ENCODE measurements at regions of chr1 and their contacts with region 1.

Region 1: DNA sequence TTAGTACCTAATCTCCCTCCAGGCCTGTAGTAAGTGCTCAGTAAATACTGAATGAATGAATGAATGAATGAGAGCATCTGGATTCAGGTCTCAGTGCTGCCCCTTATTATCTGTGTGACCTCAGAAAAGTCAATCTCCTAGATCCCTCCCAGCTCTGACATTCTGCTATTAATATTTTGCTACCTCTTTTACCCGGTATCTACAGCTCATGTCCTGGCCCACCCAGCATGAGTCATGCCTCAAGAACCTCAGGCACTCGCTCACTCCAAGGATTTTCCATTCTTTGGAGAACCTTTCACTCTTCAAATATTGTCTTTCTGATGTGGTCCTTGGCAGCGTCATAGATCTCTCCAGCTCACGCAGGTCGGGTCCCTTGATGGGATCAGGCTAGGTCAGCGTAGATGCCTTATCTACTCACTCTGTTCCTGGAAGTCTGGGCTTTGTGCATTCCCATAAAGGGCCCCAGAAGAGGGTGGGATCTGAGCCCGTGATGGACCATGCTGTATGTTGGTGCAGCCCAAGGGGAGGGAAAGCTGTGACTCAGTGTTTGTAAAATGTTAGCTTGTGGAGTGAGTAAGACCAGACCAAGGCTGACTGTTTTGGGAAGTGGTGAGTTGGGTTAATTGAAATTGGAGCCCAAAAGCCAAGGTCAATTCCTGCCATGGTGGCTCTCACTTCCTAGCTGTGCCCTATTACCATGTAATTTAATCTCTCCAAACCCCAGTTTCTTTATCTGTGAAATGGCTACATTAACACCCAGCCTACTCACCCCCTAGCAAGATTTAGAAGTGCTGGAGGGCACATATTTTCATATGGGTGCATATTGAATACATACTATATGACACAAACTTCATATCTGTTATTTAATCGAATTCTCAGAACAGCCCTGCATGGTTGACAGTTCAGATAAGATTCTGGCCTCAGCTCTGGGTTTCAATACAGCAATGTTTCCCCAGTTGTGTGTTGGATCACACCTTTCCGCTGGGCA is 214.1 kb upstream of the USP24 start:
- DNase-seq: peak; percentile 95 to 100
- H3K4me3 ChIP-seq: no peak overlapping the region
- H3K27ac ChIP-seq: peak overlapping the region; percentile 77
- H3K4me1 ChIP-seq: peaks cover 47% of the 10 kb centered on the region
- H3K27me3 ChIP-seq: no peaks in the 10 kb centered on the region
- CTCF ChIP-seq: no peak

Region 2: DNA sequence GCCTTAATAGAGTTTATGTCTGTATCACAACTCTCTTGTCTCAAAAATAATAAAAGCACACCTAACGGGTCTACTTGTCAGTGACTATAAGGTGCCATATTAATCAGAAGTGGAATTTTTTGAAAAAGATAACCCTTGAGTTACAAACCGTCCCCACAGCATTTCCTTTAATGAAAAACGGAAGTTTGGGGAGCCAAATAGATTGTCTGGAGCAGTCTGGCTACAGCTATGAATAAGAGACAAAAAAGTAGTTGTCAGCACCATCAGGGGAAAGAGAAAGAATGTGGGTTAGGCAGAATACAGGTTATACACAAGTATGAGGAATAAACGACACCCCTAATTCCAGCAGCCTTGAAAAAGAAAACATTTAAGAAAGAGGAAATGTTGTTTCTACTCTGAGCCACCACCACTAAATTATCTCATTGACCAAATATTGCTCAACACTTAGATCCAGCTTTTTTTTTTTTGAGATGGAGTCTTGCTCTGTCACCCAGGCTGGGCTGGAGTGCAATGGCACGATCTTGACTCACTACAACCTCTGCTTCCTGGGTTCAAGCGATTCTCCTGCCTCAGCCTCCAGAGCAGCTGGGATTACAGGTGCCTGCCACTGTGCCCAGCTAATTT is 184.7 kb before region 1 on chr1:
- CTCF ChIA-PET with region 1: no interaction called
- POLR2A ChIA-PET with region 1: interaction called, 13 read pairs
- intact Hi-C with region 1: no loop called
- DNase-seq: peak; percentile 39 to 86
- H3K4me3 ChIP-seq: peak overlapping the region; percentile 23; the same call in 1 of the 2 replicates
- H3K27ac ChIP-seq: peak overlapping the region; percentile 96
- H3K4me1 ChIP-seq: peaks cover 57% of the 10 kb centered on the region
- H3K27me3 ChIP-seq: no peaks in the 10 kb centered on the region
- CTCF ChIP-seq: no peak

Region 3: GRCh38 chr1:55375617-55376258 is 53.5 kb before region 1 on chr1:
- CTCF ChIA-PET with region 1: interaction called, 7 read pairs
- POLR2A ChIA-PET with region 1: no interaction called
- intact Hi-C with region 1: loop called (anchors 5 kb)
- DNase-seq: peak in 1 of 2 experiments; percentile 25
- H3K4me3 ChIP-seq: no peak overlapping the region
- H3K27ac ChIP-seq: no peak overlapping the region
- H3K4me1 ChIP-seq: no peaks in the 10 kb centered on the region; the same call in 1 of the 2 replicates
- H3K27me3 ChIP-seq: no peaks in the 10 kb centered on the region
- CTCF ChIP-seq: peak; percentile 88

Region 4: DNA sequence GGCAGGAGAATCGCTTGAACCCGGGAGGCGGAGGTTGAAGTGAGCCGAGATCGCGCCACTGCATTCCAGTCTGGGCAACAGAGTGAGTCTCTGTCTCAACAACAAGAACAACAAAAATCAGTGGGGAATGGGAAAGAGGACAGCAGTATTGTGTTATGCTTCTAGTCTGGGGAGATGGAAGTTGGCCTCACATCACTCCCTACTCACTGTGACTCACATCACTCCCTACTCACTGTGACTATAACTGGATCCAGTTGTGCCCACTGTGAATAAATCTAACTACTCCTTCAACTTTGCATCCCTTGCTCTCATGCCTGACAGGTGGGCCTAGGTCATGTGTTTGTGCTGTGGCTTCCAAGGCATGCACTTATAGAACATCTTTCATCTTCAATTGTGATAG is 71.4 kb after region 1 on chr1:
- CTCF ChIA-PET with region 1: no interaction called
- POLR2A ChIA-PET with region 1: no interaction called
- intact Hi-C with region 1: no loop called
- DNase-seq: no peak
- H3K4me3 ChIP-seq: no peak overlapping the region
- H3K27ac ChIP-seq: no peak overlapping the region
- H3K4me1 ChIP-seq: peaks cover 9% of the 10 kb centered on the region
- H3K27me3 ChIP-seq: no peaks in the 10 kb centered on the region
- CTCF ChIP-seq: no peak

Region 5: DNA sequence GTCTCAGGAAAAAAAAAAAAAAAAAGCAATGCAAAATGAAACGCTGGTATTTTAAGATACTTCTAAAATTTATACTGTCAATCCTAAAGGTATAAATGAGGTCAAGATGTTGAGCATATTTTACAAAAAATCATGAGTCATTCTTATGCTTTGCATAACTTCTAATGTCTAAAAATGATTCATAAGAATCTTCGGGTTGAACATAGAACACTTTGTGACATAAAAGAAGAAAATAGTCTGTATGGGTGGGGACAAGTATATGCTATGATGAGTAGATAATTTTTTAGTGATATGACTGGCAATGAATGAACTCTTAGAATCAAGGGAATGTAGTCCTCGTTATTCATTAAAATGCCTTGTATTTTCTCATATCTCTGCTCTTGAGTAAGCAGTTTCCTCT is 202.8 kb after region 1 on chr1:
- CTCF ChIA-PET with region 1: no interaction called
- POLR2A ChIA-PET with region 1: no interaction called
- intact Hi-C with region 1: loop called (anchors 2 kb)
- DNase-seq: peak in 1 of 2 experiments; percentile 79
- H3K4me3 ChIP-seq: no peak overlapping the region
- H3K27ac ChIP-seq: peak overlapping the region; percentile 45
- H3K4me1 ChIP-seq: peaks cover 27% of the 10 kb centered on the region
- H3K27me3 ChIP-seq: no peaks in the 10 kb centered on the region
- CTCF ChIP-seq: no peak

Region 6: DNA sequence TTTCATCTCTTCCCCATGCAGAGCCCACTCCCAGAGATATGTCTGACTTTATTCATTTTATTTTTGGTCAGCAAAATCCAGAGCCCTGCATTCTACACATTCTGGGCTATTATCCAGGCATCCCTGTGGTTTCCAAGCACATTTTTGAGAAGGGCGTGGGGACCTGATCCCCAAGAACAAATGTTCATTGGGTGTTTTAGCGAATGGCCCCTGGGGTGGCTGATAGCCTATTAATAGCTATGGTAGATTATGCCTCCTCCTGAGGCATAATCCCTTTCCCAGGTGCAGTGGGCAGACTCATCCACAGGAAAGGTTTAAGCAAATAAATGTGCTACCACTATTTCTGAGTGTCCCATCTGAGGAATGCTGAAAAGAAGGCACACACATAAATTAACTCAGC is 297.8 kb after region 1 on chr1:
- CTCF ChIA-PET with region 1: no interaction called
- POLR2A ChIA-PET with region 1: no interaction called
- intact Hi-C with region 1: loop called (anchors 1 kb)
- DNase-seq: peak; percentile 77 to 89
- H3K4me3 ChIP-seq: no peak overlapping the region
- H3K27ac ChIP-seq: peak overlapping the region; percentile 70
- H3K4me1 ChIP-seq: peaks cover 37% of the 10 kb centered on the region
- H3K27me3 ChIP-seq: no peaks in the 10 kb centered on the region
- CTCF ChIP-seq: no peak

Region 7: DNA sequence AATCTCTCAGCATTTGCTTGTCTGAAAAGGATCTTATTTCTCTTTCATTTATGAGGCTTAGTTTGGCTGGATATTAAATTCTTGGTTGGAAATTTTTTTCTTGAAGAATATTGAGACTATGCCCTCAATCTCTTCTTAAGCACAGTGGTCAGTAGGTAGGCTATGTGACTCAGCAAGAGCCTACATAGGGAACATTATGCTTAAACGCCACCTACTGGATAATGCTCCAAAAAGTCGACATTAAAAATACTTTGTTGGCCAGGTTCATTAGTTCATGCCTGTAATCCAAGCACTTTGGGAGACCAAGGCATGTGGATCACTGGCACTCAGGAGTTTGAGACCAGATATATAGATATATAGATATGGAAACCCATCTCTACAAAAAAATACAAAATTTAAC is 463.9 kb after region 1 on chr1:
- CTCF ChIA-PET with region 1: no interaction called
- POLR2A ChIA-PET with region 1: no interaction called
- intact Hi-C with region 1: loop called (anchors 1 kb)
- DNase-seq: peak in 1 of 2 experiments; percentile 43
- H3K4me3 ChIP-seq: no peak overlapping the region
- H3K27ac ChIP-seq: no peak overlapping the region
- H3K4me1 ChIP-seq: peaks cover 5% of the 10 kb centered on the region
- H3K27me3 ChIP-seq: no peaks in the 10 kb centered on the region
- CTCF ChIP-seq: peak; percentile 60

Region 8: GRCh38 chr1:56390227-56390867 is 961.1 kb after region 1 on chr1:
- CTCF ChIA-PET with region 1: no interaction called
- POLR2A ChIA-PET with region 1: no interaction called
- intact Hi-C with region 1: loop called (anchors 5 kb)
- DNase-seq: no peak
- H3K4me3 ChIP-seq: no peak overlapping the region
- H3K27ac ChIP-seq: peak overlapping the region; percentile 76
- H3K4me1 ChIP-seq: peaks cover 55% of the 10 kb centered on the region
- H3K27me3 ChIP-seq: no peaks in the 10 kb centered on the region
- CTCF ChIP-seq: no peak